ENCODE measurements at regions of chr13 and their contacts with region 1.

Region 1: GRCh38 chr13:50081679-50082425 is 66.6 kb downstream of the KCNRG start:
- DNase-seq: peak; percentile 99
- H3K4me3 ChIP-seq: peak overlapping the region; percentile 70
- H3K27ac ChIP-seq: peak overlapping the region; percentile 89
- H3K4me1 ChIP-seq: no peaks in the 10 kb centered on the region
- H3K27me3 ChIP-seq: no peaks in the 10 kb centered on the region
- CTCF ChIP-seq: no peak

Region 2: GRCh38 chr13:49996951-49997895 is 84.6 kb before region 1 on chr13 and contains the start of gene TRIM13:
- intact Hi-C with region 1: loop called (anchors 5 kb)
- DNase-seq: peak; percentile 90
- H3K4me3 ChIP-seq: peak within 1 kb of the TSS; percentile 71
- H3K27ac ChIP-seq: peak within 1 kb of the TSS; percentile 99
- H3K4me1 ChIP-seq: peaks cover 18% of the 10 kb centered on the region
- H3K27me3 ChIP-seq: no peaks in the 10 kb centered on the region
- CTCF ChIP-seq: peak; percentile 66
- total RNA-seq, gene TRIM13: 21.7 to 35.0 TPM

Region 3: GRCh38 chr13:50123862-50124536 is 42.1 kb after region 1 on chr13:
- intact Hi-C with region 1: loop called (anchors 2 kb)
- DNase-seq: peak; percentile 74
- H3K4me3 ChIP-seq: peak overlapping the region; percentile 67
- H3K27ac ChIP-seq: peak overlapping the region; percentile 98
- H3K4me1 ChIP-seq: peaks cover 13% of the 10 kb centered on the region
- H3K27me3 ChIP-seq: peaks cover 9% of the 10 kb centered on the region
- CTCF ChIP-seq: no peak